CD8-positive, alpha-beta T cell (primary cell): ENCODE measurements at regions of chr2 and their contacts with region 1.

Region 1: GRCh38 chr2:51290725-51291124 is 258.8 kb upstream of the NRXN1 start:
- DNase-seq: no peak
- ATAC-seq: no peak
- H3K4me3 ChIP-seq: no peak overlapping the region
- H3K4me3 Mint-ChIP-seq: no peak overlapping the region
- H3K27ac ChIP-seq: no peak overlapping the region
- H3K27ac Mint-ChIP-seq: no peak overlapping the region
- H3K4me1 ChIP-seq: no peaks in the 10 kb centered on the region
- H3K4me1 Mint-ChIP-seq: no peaks in the 10 kb centered on the region
- H3K27me3 ChIP-seq: no peaks in the 10 kb centered on the region
- H3K27me3 Mint-ChIP-seq: no peaks in the 10 kb centered on the region
- CTCF ChIP-seq: no peak

Region 2: GRCh38 chr2:51335087-51336058 is 44.6 kb after region 1 on chr2:
- CTCF ChIA-PET with region 1: no interaction called
- POLR2A ChIA-PET with region 1: no interaction called
- intact Hi-C with region 1: loop called in 1 of 2 experiments (anchors 2 kb)
- DNase-seq: no peak
- ATAC-seq: no peak
- H3K4me3 ChIP-seq: no peak overlapping the region
- H3K4me3 Mint-ChIP-seq: no peak overlapping the region
- H3K27ac ChIP-seq: no peak overlapping the region
- H3K27ac Mint-ChIP-seq: no peak overlapping the region
- H3K4me1 ChIP-seq: no peaks in the 10 kb centered on the region
- H3K4me1 Mint-ChIP-seq: no peaks in the 10 kb centered on the region
- H3K27me3 ChIP-seq: no peaks in the 10 kb centered on the region
- H3K27me3 Mint-ChIP-seq: no peaks in the 10 kb centered on the region
- CTCF ChIP-seq: no peak